Naive thymus-derived CD4-positive, alpha-beta T cell (primary cell): ENCODE measurements at regions of chr17 and their contacts with region 1.

Region 1: GRCh38 chr17:70144260-70144846 is 25.0 kb upstream of the KCNJ2 start:
- DNase-seq: no peak
- ATAC-seq: no peak
- H3K4me3 ChIP-seq: no peak overlapping the region
- H3K4me3 Mint-ChIP-seq: no peak overlapping the region
- H3K27ac ChIP-seq: no peak overlapping the region
- H3K27ac Mint-ChIP-seq: no peak overlapping the region
- H3K4me1 ChIP-seq: no peaks in the 10 kb centered on the region
- H3K4me1 Mint-ChIP-seq: no peaks in the 10 kb centered on the region
- H3K27me3 ChIP-seq: no peaks in the 10 kb centered on the region
- H3K27me3 Mint-ChIP-seq: peaks cover 0 to 18% (median 10%) of the 10 kb centered on the region in 5 donors

Region 2: GRCh38 chr17:69574257-69575197 is 569.8 kb before region 1 on chr17:
- CTCF ChIA-PET with region 1: no interaction called
- POLR2A ChIA-PET with region 1: no interaction called
- intact Hi-C with region 1: loop called in 1 of 2 experiments (anchors 1 kb)
- DNase-seq: no peak
- ATAC-seq: no peak
- H3K4me3 ChIP-seq: no peak overlapping the region
- H3K4me3 Mint-ChIP-seq: no peak overlapping the region
- H3K27ac ChIP-seq: no peak overlapping the region
- H3K27ac Mint-ChIP-seq: no peak overlapping the region
- H3K4me1 ChIP-seq: no peaks in the 10 kb centered on the region
- H3K4me1 Mint-ChIP-seq: peaks cover 0 to 5% (median 0%) of the 10 kb centered on the region in 7 donors
- H3K27me3 ChIP-seq: no peaks in the 10 kb centered on the region
- H3K27me3 Mint-ChIP-seq: peaks cover 2 to 19% (median 14%) of the 10 kb centered on the region in 5 donors

Region 3: DNA sequence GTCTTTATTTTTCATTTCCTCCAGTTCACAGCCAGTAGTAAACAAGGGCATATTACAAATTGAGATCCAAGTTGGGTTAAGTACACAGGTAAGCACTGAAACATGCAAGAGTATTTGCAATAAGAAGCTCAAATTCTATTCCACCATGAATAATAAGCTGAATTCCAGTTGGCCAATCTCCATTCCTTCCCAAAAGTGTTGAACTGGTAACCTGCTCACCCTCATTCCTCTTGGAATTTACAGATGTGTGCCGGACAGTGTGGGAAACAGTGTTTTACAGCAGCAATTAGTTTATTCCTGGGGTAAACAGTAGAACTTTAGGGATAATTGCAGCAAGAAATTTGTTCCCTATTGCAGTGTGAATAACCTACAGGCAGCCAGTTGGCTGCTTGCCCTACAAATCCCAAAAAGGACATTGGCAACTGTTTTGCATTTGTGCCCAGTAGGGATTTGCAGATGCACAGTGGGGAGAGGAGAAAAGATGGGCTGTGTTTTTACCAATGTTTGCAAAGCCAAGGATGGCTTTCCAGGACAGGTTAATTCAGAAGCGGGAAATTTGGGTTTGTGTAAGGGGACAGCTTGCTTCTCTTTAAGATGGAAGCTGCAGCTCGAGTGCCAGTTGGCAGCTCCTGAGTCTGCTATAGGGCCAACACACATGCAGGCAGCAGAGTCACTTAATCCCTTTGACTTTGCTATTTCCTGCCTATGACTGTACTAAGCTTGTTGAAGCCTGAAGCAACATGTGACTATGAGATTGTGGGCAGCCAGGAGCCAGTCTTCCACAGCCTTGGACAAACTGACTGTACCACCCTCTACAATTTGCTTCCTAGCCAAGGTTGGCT is 411.0 kb before region 1 on chr17:
- CTCF ChIA-PET with region 1: no interaction called
- POLR2A ChIA-PET with region 1: no interaction called
- intact Hi-C with region 1: loop called in 1 of 2 experiments (anchors 10 kb)
- DNase-seq: no peak
- ATAC-seq: no peak
- H3K4me3 ChIP-seq: no peak overlapping the region
- H3K4me3 Mint-ChIP-seq: no peak overlapping the region
- H3K27ac ChIP-seq: no peak overlapping the region
- H3K27ac Mint-ChIP-seq: no peak overlapping the region
- H3K4me1 ChIP-seq: no peaks in the 10 kb centered on the region
- H3K4me1 Mint-ChIP-seq: peaks cover 0 to 21% (median 0%) of the 10 kb centered on the region in 7 donors
- H3K27me3 ChIP-seq: no peaks in the 10 kb centered on the region
- H3K27me3 Mint-ChIP-seq: peaks cover 0 to 6% (median 0%) of the 10 kb centered on the region in 5 donors